A673 (cell line): ENCODE measurements at regions of chrX and their contacts with region 1.

Region 1: GRCh38 chrX:45735571-45735970 is 534.9 kb upstream of the DIPK2B start:
- DNase-seq: no peak
- H3K4me3 ChIP-seq: no peak overlapping the region
- H3K27ac ChIP-seq: no peak overlapping the region
- H3K4me1 ChIP-seq: no peaks in the 10 kb centered on the region
- H3K27me3 ChIP-seq: no peaks in the 10 kb centered on the region
- CTCF ChIP-seq: no peak

Region 2: GRCh38 chrX:45172890-45173289 is 562.7 kb before region 1 on chrX:
- CTCF ChIA-PET with region 1: no interaction called
- POLR2A ChIA-PET with region 1: no interaction called
- intact Hi-C with region 1: no loop called
- DNase-seq: peak; percentile 16
- H3K4me3 ChIP-seq: no peak overlapping the region
- H3K27ac ChIP-seq: no peak overlapping the region
- H3K4me1 ChIP-seq: no peaks in the 10 kb centered on the region
- H3K27me3 ChIP-seq: no peaks in the 10 kb centered on the region
- CTCF ChIP-seq: no peak

Region 3: DNA sequence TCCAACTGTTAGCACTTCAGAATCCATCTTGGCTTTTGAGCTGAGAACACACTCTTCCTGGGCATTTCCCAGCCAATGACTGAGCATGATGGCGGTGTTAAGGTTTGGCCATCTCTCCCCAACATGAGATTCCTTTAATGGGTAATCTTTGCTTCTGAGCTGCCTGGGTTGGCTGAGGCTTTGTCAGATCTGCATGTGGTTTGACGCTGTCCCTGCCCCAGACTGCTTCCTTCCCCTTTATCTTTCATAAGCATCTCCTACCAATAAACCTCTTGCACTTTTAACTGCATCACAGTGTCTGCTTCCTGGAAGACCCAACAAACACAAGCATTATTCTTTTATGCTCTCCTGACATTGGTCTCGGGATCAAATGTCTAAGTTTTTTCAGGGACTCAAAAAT is 503.4 kb before region 1 on chrX:
- CTCF ChIA-PET with region 1: no interaction called
- POLR2A ChIA-PET with region 1: no interaction called
- intact Hi-C with region 1: no loop called
- DNase-seq: no peak
- H3K4me3 ChIP-seq: no peak overlapping the region
- H3K27ac ChIP-seq: no peak overlapping the region
- H3K4me1 ChIP-seq: no peaks in the 10 kb centered on the region
- H3K27me3 ChIP-seq: no peaks in the 10 kb centered on the region
- CTCF ChIP-seq: no peak

Region 4: DNA sequence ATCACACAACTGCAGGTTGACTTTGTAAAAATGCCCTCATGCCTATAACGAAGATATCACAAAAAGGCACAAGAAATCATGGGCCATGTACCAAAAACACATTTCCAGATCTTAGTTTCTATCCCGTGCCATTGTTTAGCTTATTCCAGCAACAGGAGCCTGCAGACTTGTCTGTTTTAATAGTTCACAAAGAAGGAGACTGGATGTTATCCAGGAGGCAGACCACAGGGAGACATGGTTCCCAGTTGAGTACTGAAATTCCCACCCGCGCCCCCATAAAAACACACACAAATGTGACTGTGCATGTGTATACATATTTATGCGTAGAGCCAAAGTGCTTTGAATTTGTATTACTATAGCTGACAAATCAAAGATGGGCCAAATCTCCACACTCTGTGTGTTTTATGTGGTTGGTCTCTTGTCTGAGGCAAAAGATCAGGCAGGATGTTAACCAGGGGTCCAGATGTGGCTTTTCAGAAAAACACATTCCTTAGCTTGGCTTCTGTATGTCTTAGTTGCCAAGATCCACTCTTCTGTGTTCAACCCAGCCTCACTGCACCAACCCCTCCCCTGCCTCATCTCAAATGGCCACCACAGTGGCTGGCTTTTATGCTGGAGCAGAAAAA is 65.7 kb before region 1 on chrX:
- CTCF ChIA-PET with region 1: no interaction called
- POLR2A ChIA-PET with region 1: no interaction called
- intact Hi-C with region 1: loop called (anchors 10 kb)
- DNase-seq: no peak
- H3K4me3 ChIP-seq: no peak overlapping the region
- H3K27ac ChIP-seq: no peak overlapping the region
- H3K4me1 ChIP-seq: no peaks in the 10 kb centered on the region
- H3K27me3 ChIP-seq: no peaks in the 10 kb centered on the region
- CTCF ChIP-seq: no peak

Region 5: GRCh38 chrX:45889471-45889870 is 153.9 kb after region 1 on chrX:
- CTCF ChIA-PET with region 1: no interaction called
- POLR2A ChIA-PET with region 1: no interaction called
- intact Hi-C with region 1: no loop called
- DNase-seq: no peak
- H3K4me3 ChIP-seq: no peak overlapping the region
- H3K27ac ChIP-seq: no peak overlapping the region
- H3K4me1 ChIP-seq: no peaks in the 10 kb centered on the region
- H3K27me3 ChIP-seq: no peaks in the 10 kb centered on the region
- CTCF ChIP-seq: no peak